Natural killer cell (primary cell): ENCODE measurements at regions of chr12 and their contacts with region 1.

Region 1: GRCh38 chr12:98653866-98654493 is 8.9 kb downstream of the APAF1 start:
- DNase-seq: peak in 1 of 2 donors; percentile 76
- ATAC-seq: peak; percentile 52 to 80 (median 69)
- H3K4me3 ChIP-seq: no peak overlapping the region
- H3K4me3 Mint-ChIP-seq: no peak overlapping the region
- H3K27ac ChIP-seq: no peak overlapping the region
- H3K27ac Mint-ChIP-seq: peak overlapping the region in 1 of 2 donors; percentile 13
- H3K4me1 ChIP-seq: no peaks in the 10 kb centered on the region
- H3K4me1 Mint-ChIP-seq: peaks cover 5 to 13% of the 10 kb centered on the region in 2 donors
- H3K27me3 ChIP-seq: no peaks in the 10 kb centered on the region
- H3K27me3 Mint-ChIP-seq: no peaks in the 10 kb centered on the region
- CTCF ChIP-seq: peak; percentile 68

Region 2: DNA sequence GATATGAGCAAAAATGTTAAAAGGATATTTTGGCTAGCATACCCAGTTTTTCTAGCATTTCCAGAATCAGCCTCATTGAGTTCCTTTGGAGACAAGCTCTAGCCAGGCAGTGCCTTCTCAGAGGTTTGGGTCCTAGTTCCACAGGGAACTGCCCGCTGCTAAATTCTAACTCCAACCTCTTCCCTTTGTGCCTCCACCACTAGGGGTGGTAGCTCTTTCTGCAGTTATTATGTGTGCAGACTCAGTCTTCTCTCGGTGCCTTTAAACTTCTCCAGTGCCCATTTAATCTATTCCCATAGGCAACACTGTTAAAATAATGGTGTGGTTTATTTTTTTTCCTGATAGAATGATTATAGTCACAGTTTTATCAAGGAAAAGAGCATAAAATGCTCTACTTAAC is 82.0 kb before region 1 on chr12:
- intact Hi-C with region 1: loop called (anchors 1 kb)
- DNase-seq: no peak
- ATAC-seq: no peak
- H3K4me3 ChIP-seq: no peak overlapping the region
- H3K4me3 Mint-ChIP-seq: no peak overlapping the region
- H3K27ac ChIP-seq: no peak overlapping the region
- H3K27ac Mint-ChIP-seq: no peak overlapping the region
- H3K4me1 ChIP-seq: peaks cover under 1% of the 10 kb centered on the region
- H3K4me1 Mint-ChIP-seq: peaks cover 1% of the 10 kb centered on the region in 2 donors
- H3K27me3 ChIP-seq: no peaks in the 10 kb centered on the region
- H3K27me3 Mint-ChIP-seq: no peaks in the 10 kb centered on the region
- CTCF ChIP-seq: no peak